Activated B cell treated with CpG ODN at 0.5 μM for 24 hours (primary cell): ENCODE measurements at regions of chr19 and their contacts with region 1.

Region 1: DNA sequence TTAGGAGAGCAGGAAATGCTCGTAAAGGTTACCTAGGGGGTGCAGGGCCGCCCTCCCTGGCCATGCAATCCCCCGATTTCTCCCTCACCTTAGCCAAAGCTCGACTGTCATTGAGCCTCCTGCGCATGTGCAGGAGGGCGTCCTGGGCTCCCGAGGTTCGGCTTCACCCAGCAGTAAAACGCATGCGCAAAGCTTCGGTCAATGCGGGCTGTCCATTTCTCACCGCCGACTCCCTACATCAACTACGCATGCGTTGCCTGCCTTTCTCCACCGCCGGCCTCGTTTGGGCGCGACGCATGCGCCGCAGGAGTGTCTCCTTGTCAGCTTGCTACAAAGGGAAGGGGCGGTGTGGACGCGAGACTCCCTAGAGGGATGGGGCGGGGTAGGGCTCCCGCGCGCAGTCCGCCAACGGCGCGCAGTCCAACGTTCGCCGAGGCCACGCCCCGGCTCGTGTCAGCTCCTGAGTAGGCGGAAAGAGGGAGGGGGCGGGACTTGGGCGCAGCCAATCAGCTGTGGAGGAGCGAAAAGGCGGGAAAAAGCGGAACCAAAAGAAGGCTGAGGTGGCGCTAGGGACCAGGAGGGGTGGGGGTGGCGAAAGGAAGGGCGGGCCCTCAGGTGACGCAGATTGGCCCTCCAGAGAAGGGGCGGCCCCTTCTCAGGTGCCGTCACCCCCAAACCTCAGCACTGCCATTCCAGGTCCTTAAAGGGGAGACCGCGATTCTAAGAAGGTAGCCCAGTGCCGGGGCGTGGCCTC is at the starts of genes SYNGR4 and TMEM143:
- DNase-seq: peak; percentile 93
- ATAC-seq: peak; percentile 92
- H3K4me3 Mint-ChIP-seq: peak within 1 kb of the TSS; percentile 87
- H3K27ac Mint-ChIP-seq: peak within 1 kb of the TSS; percentile 93
- H3K4me1 Mint-ChIP-seq: peaks cover 19% of the 10 kb centered on the region
- H3K27me3 Mint-ChIP-seq: no peaks in the 10 kb centered on the region
- CTCF ChIP-seq: no peak
- total RNA-seq, gene SYNGR4: not detected in 2 replicates
- total RNA-seq, gene TMEM143: 10.2 and 10.5 TPM in 2 replicates

Region 2: DNA sequence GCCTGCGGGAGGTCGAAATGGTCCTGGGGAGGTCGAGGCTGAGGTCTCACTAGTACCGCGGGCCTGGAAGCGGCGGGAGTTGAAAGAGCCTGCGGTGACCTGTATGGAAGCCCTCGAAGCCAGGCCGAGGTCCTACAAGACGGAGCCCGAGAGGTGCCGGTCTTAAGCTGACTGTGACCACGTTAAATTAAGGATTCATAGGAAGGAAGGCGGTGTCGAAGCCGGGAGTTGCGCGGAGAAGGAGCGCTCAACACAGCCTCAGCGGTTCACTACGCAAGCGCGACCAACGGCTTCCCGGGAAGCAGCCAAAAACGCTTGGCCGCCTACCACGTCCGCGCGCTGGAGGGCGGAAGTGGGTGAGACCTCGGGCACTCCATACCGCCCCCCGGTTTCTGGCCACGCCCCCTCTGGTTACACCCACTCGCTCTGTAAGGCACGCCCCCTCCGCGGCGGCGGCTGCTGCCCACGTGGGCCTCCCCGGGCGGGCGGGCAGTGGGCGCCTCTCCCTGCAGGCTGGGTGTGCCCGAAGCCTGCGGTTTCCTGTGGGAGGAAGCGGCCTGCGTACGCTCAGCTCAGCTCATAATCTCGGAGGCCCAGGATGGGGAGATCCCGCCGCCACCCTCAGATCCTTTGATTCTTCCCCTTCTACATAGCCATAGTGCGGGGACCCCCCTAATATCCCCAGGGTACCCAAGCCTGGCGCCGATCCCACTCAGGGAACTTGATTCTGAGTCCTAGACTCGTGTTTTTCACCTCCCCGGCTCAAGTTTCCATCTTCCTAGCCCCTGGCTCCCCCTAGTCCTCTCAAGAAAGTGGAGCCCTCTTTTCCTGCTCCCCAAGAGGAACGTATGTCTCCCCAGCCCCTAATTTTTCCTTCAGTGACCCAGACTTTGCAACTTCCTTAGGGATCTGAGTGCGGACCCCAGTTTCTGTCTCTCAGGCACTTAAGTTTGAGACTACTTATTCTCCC is 42.1 kb before region 1 on chr19:
- CTCF ChIA-PET with region 1: interaction called, 3 read pairs
- POLR2A ChIA-PET with region 1: interaction called, 21 read pairs
- intact Hi-C with region 1: loop called (anchors 1 kb)
- DNase-seq: peak; percentile 99
- ATAC-seq: peak; percentile 66
- H3K4me3 Mint-ChIP-seq: peak overlapping the region; percentile 94
- H3K27ac Mint-ChIP-seq: peak overlapping the region; percentile 99
- H3K4me1 Mint-ChIP-seq: peaks cover 63% of the 10 kb centered on the region
- H3K27me3 Mint-ChIP-seq: no peaks in the 10 kb centered on the region
- CTCF ChIP-seq: no peak

Region 3: GRCh38 chr19:48398375-48399235 is 34.6 kb after region 1 on chr19:
- CTCF ChIA-PET with region 1: no interaction called
- POLR2A ChIA-PET with region 1: interaction called, 6 read pairs
- intact Hi-C with region 1: loop called (anchors 1 kb)
- DNase-seq: peak; percentile 80
- ATAC-seq: peak; percentile 72
- H3K4me3 Mint-ChIP-seq: peak overlapping the region; percentile 66
- H3K27ac Mint-ChIP-seq: no peak overlapping the region
- H3K4me1 Mint-ChIP-seq: peaks cover 46% of the 10 kb centered on the region
- H3K27me3 Mint-ChIP-seq: peaks cover 26% of the 10 kb centered on the region
- CTCF ChIP-seq: no peak

Region 4: GRCh38 chr19:48468775-48469288 is 104.8 kb after region 1 on chr19:
- CTCF ChIA-PET with region 1: no interaction called
- POLR2A ChIA-PET with region 1: no interaction called
- intact Hi-C with region 1: loop called (anchors 1 kb)
- DNase-seq: peak; percentile 95
- ATAC-seq: peak; percentile 88
- H3K4me3 Mint-ChIP-seq: peak overlapping the region; percentile 90
- H3K27ac Mint-ChIP-seq: peak overlapping the region; percentile 94
- H3K4me1 Mint-ChIP-seq: peaks cover 27% of the 10 kb centered on the region
- H3K27me3 Mint-ChIP-seq: no peaks in the 10 kb centered on the region
- CTCF ChIP-seq: no peak

Region 5: DNA sequence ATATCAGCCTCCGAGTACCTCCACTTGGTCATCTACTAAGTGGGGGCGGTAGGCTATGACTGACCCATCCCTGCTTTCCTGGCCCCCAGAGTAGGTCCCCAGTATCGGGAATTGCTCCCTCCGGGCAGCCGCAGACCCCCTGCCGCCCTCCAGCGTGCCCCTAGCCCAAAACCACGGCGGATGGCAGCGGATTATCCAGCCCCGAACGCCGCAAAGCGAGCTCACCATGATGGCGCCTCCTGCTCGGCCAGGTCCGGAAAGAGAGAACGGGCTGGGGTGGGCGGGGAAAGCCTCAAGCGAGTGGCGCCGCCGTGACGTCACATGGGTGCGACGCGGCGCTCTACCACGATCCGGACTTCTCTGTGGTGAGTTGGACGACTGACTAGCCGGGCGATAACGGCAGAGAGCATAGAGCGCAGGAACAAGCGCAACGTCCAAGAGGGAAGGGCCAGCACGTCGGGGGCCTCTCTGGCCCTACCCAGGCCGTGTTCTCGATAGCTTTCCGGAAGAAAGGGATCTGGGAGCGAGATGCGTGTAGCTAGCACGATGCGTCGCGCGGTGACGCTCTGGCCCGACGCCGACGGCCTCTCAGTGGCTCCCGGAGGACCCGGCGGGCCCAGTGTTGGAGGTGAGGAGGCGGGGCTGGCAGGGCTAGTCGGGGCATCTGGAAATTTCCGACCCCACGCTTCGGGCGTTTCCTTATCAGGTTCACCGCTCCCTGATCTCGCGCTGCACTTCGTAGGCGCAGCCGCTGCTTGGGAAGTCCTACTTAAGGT is 255.1 kb after region 1 on chr19 and contains the starts of genes RPL18 and SPHK2:
- CTCF ChIA-PET with region 1: no interaction called
- POLR2A ChIA-PET with region 1: interaction called, 15 read pairs
- intact Hi-C with region 1: loop called (anchors 1 kb)
- DNase-seq: peak; percentile 93
- ATAC-seq: peak; percentile 81
- H3K4me3 Mint-ChIP-seq: peak within 1 kb of the TSS; percentile 98
- H3K27ac Mint-ChIP-seq: peak within 1 kb of the TSS; percentile 97
- H3K4me1 Mint-ChIP-seq: peaks cover 56% of the 10 kb centered on the region
- H3K27me3 Mint-ChIP-seq: no peaks in the 10 kb centered on the region
- CTCF ChIP-seq: no peak
- total RNA-seq, gene RPL18: 2,427 and 2,762 TPM in 2 replicates
- total RNA-seq, gene SPHK2: 38.2 and 48.5 TPM in 2 replicates